Activated naive CD4-positive, alpha-beta T cell treated with anti-CD3 and anti-CD28 coated beads for 36 hours (primary cell): ENCODE measurements at regions of chr12 and their contacts with region 1.

Region 1: GRCh38 chr12:2812290-2813213 is at the start of gene ITFG2:
- DNase-seq: peak; percentile 98
- H3K4me3 Mint-ChIP-seq: peak within 1 kb of the TSS; percentile 99
- H3K27ac Mint-ChIP-seq: peak within 1 kb of the TSS; percentile 98
- H3K4me1 Mint-ChIP-seq: peaks cover 25% of the 10 kb centered on the region
- H3K27me3 Mint-ChIP-seq: no peaks in the 10 kb centered on the region
- total RNA-seq, gene ITFG2: 27.5 to 30.5 TPM

Region 2: DNA sequence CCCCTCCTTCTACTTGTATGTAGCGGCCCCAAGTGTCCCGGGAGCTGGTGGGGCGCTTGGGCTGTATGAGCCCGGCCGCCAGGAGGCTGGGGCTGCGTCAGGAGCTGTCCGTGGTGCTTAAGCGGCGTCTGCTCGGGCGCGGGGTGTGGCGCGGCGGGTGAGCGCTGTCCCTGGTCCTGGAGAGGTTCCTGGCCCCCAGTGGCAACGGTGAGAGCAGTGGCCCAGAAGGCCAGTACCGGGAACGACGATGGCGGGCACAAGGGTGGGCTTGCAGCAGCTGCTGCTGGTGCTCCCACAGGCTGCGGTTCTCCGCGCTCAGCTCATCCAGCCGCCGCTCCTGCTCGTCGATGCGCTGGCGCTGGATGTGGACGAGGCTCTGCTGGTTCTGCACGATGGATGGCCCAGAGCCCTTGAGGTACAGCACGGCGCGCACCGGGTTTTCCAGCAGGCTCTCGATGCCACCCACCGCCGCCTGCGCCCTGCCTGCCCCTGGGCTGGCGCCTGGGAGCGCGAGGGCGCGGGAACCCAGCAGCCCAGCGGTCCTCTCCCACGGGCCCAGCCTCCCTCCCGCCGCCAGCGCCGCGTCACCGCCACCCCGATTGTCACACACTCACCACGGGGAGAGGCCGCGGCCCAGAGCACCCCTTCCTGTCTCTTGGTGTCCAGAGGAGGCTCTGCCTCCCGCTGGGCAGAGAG is 59.7 kb before region 1 on chr12:
- CTCF ChIA-PET with region 1: no interaction called
- intact Hi-C with region 1: loop called (anchors 1 kb)
- DNase-seq: peak; percentile 83
- H3K4me3 Mint-ChIP-seq: no peak overlapping the region
- H3K27ac Mint-ChIP-seq: no peak overlapping the region
- H3K4me1 Mint-ChIP-seq: no peaks in the 10 kb centered on the region
- H3K27me3 Mint-ChIP-seq: peaks cover 21% of the 10 kb centered on the region

Region 3: DNA sequence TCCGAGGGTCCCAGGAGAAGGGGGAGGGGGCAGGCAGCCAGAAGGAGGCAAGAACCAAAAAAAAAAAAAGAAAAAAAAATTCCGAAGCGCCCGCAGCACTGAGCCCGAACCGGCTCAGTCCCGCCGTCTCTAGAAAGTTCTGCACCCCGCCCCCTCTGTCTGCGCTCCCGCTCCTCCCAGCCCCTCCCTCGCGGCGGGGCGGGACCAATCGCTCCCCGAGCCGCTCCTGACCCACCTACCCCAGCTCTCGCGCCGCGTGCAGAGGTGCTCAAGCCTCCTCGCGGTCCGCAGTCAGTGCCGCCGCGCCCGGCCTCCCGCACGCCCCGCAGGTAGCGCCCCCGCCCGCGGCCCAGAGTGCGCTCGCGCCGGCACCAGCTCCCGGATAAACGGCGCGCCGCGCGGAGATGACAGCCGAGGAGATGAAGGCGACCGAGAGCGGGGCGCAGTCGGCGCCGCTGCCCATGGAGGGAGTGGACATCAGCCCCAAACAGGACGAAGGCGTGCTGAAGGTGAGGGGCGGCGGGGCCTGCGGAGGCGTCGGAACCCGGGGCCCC is 17.7 kb before region 1 on chr12 and contains the start of gene FKBP4:
- CTCF ChIA-PET with region 1: interaction called, 10 read pairs
- intact Hi-C with region 1: loop called (anchors 1 kb)
- DNase-seq: peak; percentile 91
- H3K4me3 Mint-ChIP-seq: peak within 1 kb of the TSS; percentile 88
- H3K27ac Mint-ChIP-seq: peak within 1 kb of the TSS; percentile 68
- H3K4me1 Mint-ChIP-seq: peaks cover 26% of the 10 kb centered on the region
- H3K27me3 Mint-ChIP-seq: no peaks in the 10 kb centered on the region
- total RNA-seq, gene FKBP4: 139 TPM